ENCODE measurements at regions of chr15 and their contacts with region 1.

Region 1: DNA sequence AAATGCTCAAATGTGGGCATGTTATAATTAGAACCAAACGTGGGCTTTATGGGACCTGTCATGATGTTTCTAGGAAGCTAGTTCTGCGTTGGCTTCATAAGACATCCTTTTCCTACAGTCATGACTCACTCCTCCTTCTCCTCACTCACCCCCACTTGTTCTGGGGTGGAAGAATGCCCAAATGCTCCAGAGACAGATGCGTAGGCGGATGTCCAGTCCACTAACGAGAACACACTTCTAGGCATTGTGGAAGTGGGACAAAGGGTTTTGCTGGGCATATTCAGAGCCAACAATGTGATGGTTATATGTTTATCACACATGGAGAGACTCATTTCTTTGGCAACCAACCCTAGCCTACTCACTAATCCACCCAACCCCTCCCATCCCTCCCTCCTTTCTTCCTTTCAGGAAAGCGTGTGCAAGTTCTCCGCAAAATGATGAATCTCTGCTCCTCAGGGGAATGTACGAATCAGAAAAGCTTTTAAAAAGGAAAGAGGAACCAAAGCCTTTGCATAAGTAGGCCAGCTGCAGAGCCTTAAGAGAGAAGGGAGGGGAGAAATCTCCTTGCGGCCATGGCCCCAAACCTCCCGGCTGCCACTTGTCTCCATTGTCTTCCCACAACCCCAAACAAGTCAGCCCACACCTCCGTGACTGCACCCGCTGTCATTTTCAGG is 123.0 kb upstream of the SPRED1 start:
- DNase-seq: peak; percentile 33 to 73 (median 58)
- H3K4me3 ChIP-seq: peak overlapping the region in 1 of 3 experiments; percentile 59
- H3K4me3 Mint-ChIP-seq: peak overlapping the region; percentile 59 to 80
- H3K27ac ChIP-seq: peak overlapping the region; percentile 82 to 89
- H3K27ac Mint-ChIP-seq: peak overlapping the region; percentile 90 to 99 (median 96)
- H3K4me1 ChIP-seq: peaks cover 62 to 75% of the 10 kb centered on the region in 2 donors
- H3K4me1 Mint-ChIP-seq: peaks cover 60% of the 10 kb centered on the region
- H3K27me3 ChIP-seq: peaks cover 6 to 8% of the 10 kb centered on the region in 2 donors
- H3K27me3 Mint-ChIP-seq: peaks cover 8 to 17% (median 14%) of the 10 kb centered on the region in 3 donors
- CTCF ChIP-seq: no peak

Region 2: DNA sequence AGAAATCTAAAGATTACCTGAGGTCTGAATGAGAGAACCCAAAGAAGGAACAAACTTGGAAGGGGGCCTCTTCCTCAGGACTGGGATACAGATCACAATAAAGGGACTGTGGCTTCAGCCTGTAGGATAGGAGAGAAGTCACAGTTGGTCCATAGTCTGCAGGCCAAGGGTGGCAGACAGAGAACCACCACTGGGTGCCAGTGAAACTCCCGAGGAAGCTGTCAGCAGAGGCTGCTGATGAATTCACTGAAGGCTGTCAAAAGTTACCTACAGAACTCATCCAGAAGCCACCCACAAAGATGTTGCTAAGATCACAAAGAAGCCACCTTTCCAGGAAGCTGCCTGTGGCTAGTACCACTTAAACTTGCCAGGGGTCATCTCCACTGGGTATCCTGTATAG is 116.8 kb before region 1 on chr15:
- intact Hi-C with region 1: loop called in 1 of 2 experiments (anchors 5 kb)
- DNase-seq: no peak
- H3K4me3 ChIP-seq: no peak overlapping the region
- H3K4me3 Mint-ChIP-seq: no peak overlapping the region
- H3K27ac ChIP-seq: no peak overlapping the region
- H3K27ac Mint-ChIP-seq: no peak overlapping the region
- H3K4me1 ChIP-seq: peaks cover 8% of the 10 kb centered on the region in 2 donors
- H3K4me1 Mint-ChIP-seq: peaks cover 13% of the 10 kb centered on the region
- H3K27me3 ChIP-seq: no peaks in the 10 kb centered on the region
- H3K27me3 Mint-ChIP-seq: peaks cover 2 to 6% (median 3%) of the 10 kb centered on the region in 3 donors
- CTCF ChIP-seq: no peak

Region 3: DNA sequence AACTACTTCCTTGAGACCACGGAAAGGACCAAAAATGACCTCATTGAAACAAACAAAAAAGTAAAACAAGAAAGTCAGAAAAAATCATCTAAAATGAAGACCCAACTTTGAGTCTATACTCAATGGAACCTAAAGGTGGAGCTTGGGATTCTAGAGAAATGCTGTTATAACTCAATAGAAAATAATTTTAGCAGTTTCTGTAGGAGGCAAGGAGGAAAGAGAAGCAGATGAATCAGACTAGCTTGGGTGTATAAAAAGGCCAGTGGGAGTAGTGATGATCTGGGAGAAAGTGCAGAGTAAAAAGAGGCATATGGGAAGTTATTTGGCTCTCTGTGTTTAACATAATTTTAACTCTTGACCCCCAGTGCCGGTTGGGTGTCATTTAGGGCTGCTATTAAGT is 100.8 kb before region 1 on chr15:
- intact Hi-C with region 1: loop called in 1 of 2 experiments (anchors 10 kb)
- DNase-seq: no peak
- H3K4me3 ChIP-seq: no peak overlapping the region
- H3K4me3 Mint-ChIP-seq: no peak overlapping the region
- H3K27ac ChIP-seq: no peak overlapping the region
- H3K27ac Mint-ChIP-seq: no peak overlapping the region
- H3K4me1 ChIP-seq: no peaks in the 10 kb centered on the region
- H3K4me1 Mint-ChIP-seq: no peaks in the 10 kb centered on the region
- H3K27me3 ChIP-seq: peaks cover 0 to 7% of the 10 kb centered on the region in 2 donors
- H3K27me3 Mint-ChIP-seq: peaks cover 11 to 12% (median 11%) of the 10 kb centered on the region in 3 donors
- CTCF ChIP-seq: no peak

Region 4: GRCh38 chr15:38072348-38073177 is 57.1 kb before region 1 on chr15:
- intact Hi-C with region 1: loop called in 1 of 2 experiments (anchors 5 kb)
- DNase-seq: peak; percentile 30 to 76 (median 66)
- H3K4me3 ChIP-seq: peak overlapping the region; percentile 41 to 78 (median 55)
- H3K4me3 Mint-ChIP-seq: peak overlapping the region; percentile 76 to 92
- H3K27ac ChIP-seq: peak overlapping the region; percentile 83 to 86
- H3K27ac Mint-ChIP-seq: peak overlapping the region; percentile 86 to 100 (median 93)
- H3K4me1 ChIP-seq: peaks cover 52 to 61% of the 10 kb centered on the region in 2 donors
- H3K4me1 Mint-ChIP-seq: peaks cover 62% of the 10 kb centered on the region
- H3K27me3 ChIP-seq: peaks cover 3 to 21% of the 10 kb centered on the region in 2 donors
- H3K27me3 Mint-ChIP-seq: peaks cover 17 to 23% (median 22%) of the 10 kb centered on the region in 3 donors
- CTCF ChIP-seq: no peak

Region 5: GRCh38 chr15:38084289-38084688 is 45.4 kb before region 1 on chr15:
- intact Hi-C with region 1: loop called (anchors 2 to 5 kb)
- DNase-seq: peak; percentile 68 to 86 (median 72)
- H3K4me3 ChIP-seq: peak overlapping the region in 1 of 3 experiments; percentile 57
- H3K4me3 Mint-ChIP-seq: peak overlapping the region in 1 of 2 donors; percentile 56
- H3K27ac ChIP-seq: peak overlapping the region in 1 of 2 donors; percentile 80
- H3K27ac Mint-ChIP-seq: peak overlapping the region; percentile 87 to 94 (median 91)
- H3K4me1 ChIP-seq: peaks cover 54 to 66% of the 10 kb centered on the region in 2 donors
- H3K4me1 Mint-ChIP-seq: peaks cover 57% of the 10 kb centered on the region
- H3K27me3 ChIP-seq: peaks cover 0 to 3% of the 10 kb centered on the region in 2 donors
- H3K27me3 Mint-ChIP-seq: peaks cover 3 to 5% (median 5%) of the 10 kb centered on the region in 3 donors
- CTCF ChIP-seq: no peak

Region 6: DNA sequence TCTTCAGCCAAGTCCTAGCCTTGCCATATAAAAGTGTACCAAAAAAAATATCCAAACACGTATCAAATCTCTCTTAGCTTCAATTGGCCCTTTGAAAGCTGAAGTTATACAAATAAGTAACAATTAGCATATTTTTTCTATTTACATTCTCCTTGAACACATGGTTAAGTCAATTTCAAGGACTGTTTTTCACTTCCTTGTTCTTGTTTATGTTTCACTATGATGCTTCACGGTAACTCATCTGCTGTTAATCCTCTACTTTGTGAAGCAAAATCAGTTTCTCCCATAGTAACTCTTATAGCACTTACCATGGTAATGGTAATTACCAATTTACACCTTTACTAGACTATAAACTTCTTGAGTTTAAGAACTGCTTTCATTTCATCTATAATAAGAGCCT is 112.4 kb after region 1 on chr15:
- intact Hi-C with region 1: loop called in 1 of 2 experiments (anchors 10 kb)
- DNase-seq: no peak
- H3K4me3 ChIP-seq: no peak overlapping the region
- H3K4me3 Mint-ChIP-seq: no peak overlapping the region
- H3K27ac ChIP-seq: no peak overlapping the region
- H3K27ac Mint-ChIP-seq: no peak overlapping the region
- H3K4me1 ChIP-seq: no peaks in the 10 kb centered on the region
- H3K4me1 Mint-ChIP-seq: no peaks in the 10 kb centered on the region
- H3K27me3 ChIP-seq: no peaks in the 10 kb centered on the region
- H3K27me3 Mint-ChIP-seq: peaks cover 6 to 9% (median 8%) of the 10 kb centered on the region in 3 donors
- CTCF ChIP-seq: no peak